Thyroid gland (tissue), 4 donors: ENCODE measurements at regions of chr6 and their contacts with region 1.

Region 1: DNA sequence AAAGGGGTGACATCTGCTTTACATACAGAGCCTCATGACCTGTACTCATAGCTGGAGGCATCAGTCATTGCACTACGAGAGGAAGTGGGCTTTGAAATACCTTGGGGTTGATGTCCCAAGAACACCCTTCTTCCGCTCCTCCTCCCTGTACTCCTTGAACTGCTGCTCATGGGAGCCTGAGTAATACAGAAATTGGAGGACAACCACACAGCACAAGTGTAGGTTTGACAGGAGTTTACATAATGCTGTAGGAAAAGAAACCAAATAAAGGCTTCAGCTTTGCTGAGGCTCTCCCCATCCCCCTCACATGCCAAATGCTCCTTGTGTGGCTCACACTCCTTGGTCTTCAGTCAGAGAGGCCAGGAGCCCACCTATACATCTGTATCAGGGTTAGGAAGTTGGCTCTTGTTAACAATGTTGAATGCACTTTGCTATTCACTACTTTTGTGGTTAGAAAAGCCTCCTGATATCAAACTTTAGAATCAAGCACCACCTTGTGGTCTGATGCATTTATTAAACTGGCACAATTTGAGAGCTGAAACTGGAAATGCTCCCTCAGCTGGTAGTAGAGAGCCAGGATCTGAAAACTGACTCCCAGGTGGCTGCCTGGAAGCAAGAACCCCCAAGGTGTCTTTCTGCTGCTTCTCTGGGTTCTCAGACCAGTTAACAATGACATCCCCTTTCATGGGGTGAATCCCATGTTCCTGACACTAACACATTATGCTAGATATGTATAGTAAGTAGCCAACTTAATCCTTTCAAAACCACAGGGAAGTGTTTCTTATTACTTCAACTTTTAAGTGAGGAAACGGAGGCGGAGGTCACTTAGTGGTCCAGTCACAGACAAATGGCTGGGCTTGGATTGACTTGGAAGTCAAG is 56.2 kb upstream of the EDN1 start:
- DNase-seq: peak; percentile 27 to 34
- H3K4me3 ChIP-seq: no peak overlapping the region
- H3K27ac ChIP-seq: no peak overlapping the region
- H3K4me1 ChIP-seq: no peaks in the 10 kb centered on the region
- H3K27me3 ChIP-seq: no peaks in the 10 kb centered on the region
- CTCF ChIP-seq: peak; percentile 51 to 98 (median 84)
- POLR2A ChIP-seq: no peak

Region 2: GRCh38 chr6:11654876-11655275 is 579.1 kb before region 1 on chr6:
- intact Hi-C with region 1: loop called (anchors 5 kb)
- DNase-seq: no peak
- H3K4me3 ChIP-seq: no peak overlapping the region
- H3K27ac ChIP-seq: no peak overlapping the region
- H3K4me1 ChIP-seq: peaks cover 0 to 12% of the 10 kb centered on the region in 2 donors
- H3K27me3 ChIP-seq: no peaks in the 10 kb centered on the region
- CTCF ChIP-seq: no peak
- POLR2A ChIP-seq: no peak